Right cardiac atrium (tissue), 5 donors: ENCODE measurements at regions of chr13 and their contacts with region 1.

Region 1: GRCh38 chr13:106493533-106494220 is 41.8 kb downstream of the EFNB2 start:
- DNase-seq: no peak
- ATAC-seq: no peak
- H3K4me3 ChIP-seq: no peak overlapping the region
- H3K27ac ChIP-seq: no peak overlapping the region
- H3K4me1 ChIP-seq: peaks cover 2% of the 10 kb centered on the region
- H3K27me3 ChIP-seq: no peaks in the 10 kb centered on the region

Region 2: DNA sequence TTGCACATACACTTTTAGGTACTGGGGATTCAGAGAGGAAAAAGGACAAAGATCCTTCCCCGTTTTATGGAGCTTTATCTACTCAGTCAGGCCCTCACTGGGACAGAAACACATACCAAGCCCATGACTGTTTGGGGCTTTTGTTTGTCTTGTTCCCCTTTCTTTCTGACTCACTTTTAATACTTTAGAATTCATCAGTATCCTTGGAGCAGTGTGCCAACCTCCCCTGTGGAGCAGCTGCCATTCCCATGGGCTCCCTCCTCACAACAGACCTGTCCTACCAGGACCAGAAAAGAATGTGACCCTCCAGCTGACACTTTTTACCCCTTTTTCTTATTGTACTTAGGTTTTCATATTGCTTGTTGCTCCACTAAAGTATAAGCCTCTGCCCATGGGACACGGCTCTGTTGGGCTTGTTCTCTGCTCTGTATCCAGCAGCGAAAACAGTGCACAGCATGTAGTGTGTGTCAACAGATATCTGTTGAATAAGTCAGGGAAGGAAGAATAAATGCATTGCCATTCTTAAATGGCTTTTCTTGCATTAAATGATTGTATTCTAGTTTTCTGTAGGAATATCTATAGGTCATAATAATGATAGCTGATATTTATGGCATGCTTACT is 389.3 kb before region 1 on chr13:
- intact Hi-C with region 1: loop called in 1 of 4 experiments (anchors 10 kb)
- DNase-seq: no peak
- ATAC-seq: no peak
- H3K4me3 ChIP-seq: no peak overlapping the region
- H3K27ac ChIP-seq: no peak overlapping the region
- H3K4me1 ChIP-seq: peaks cover 5% of the 10 kb centered on the region
- H3K27me3 ChIP-seq: no peaks in the 10 kb centered on the region